Common myeloid progenitor, CD34-positive (primary cell): ENCODE measurements at regions of chr15 and their contacts with region 1.

Region 1: DNA sequence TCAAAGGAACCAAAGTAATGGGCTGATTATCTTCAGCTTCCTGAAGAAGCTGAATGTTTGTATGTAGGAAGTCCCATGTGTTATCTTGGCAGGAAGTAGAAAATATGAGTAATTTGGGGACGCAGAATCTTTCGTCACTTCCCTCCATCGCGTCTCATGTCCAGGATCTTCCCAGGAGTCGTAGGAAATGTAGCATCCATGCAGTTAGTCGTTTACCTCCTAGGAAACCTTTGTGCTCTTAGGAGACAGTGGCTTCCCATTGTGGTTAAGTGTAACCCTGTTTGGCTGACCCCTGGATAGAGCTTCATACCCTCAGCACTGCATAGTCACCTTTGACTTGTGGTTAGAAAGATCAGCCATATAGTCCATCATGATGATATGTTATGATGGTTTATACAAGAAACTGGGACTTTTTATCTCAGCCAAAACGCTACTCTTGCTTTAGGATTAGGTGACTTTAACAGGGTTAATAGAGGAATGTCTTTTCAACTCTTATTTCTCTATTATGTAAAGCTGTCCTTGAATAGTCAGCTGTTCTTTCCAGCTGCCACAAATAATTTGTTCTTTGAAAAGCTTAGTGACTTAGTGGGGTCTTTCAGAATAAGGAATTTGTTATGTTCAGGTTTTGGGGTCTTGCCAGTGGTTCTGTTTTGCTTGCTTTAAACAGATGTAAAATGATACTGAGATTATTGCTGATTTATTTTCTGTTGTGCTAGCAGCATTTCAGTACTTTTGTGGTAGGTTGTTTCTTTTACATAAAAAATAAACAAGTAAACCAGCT is 92.2 kb downstream of the KLHL25 start:
- DNase-seq: peak; percentile 41 to 55 (median 46)
- H3K4me3 ChIP-seq: peak overlapping the region in 2 of 7 experiments; percentile 32 to 40
- H3K27ac ChIP-seq: peak overlapping the region; percentile 76 to 90
- H3K4me1 ChIP-seq: peaks cover 13 to 56% (median 46%) of the 10 kb centered on the region in 4 experiments
- H3K27me3 ChIP-seq: no peaks in the 10 kb centered on the region

Region 2: DNA sequence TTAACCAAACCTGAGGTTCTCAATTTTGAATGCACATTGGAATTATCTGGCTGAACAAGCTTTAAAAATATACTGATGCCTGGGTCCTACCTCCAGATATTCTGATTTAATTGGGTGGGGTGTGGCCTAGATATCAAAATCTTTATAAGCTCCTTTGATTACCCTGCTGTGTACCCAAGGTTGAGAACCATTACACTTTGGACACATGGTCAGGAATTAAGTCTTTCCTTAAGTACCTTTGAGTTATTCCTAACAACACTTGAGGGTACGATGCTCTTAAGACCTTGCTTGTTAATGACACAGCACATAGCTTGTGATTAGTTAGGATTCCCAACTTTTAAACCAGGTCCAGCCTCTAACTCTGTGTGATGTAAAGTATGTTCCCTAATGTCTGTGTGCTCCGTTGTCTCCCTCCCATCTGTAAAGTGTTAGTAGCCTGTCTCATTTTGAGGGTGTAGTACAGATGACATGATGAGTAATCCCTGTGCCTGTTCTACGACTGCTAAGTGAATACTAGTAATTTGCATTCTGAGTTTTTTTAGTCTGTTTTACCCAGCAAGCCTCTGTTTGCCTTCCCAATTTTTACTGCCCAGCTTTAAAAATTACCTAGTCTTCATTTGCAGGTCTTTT is 62.6 kb before region 1 on chr15:
- CTCF ChIA-PET with region 1: no interaction called
- POLR2A ChIA-PET with region 1: no interaction called
- DNase-seq: no peak
- H3K4me3 ChIP-seq: no peak overlapping the region
- H3K27ac ChIP-seq: no peak overlapping the region
- H3K4me1 ChIP-seq: peaks cover 0 to 12% (median 3%) of the 10 kb centered on the region in 4 experiments
- H3K27me3 ChIP-seq: no peaks in the 10 kb centered on the region

Region 3: GRCh38 chr15:85689729-85690128 is 12.8 kb before region 1 on chr15:
- CTCF ChIA-PET with region 1: interaction called, 12 read pairs
- POLR2A ChIA-PET with region 1: interaction called, 4 read pairs
- DNase-seq: peak; percentile 77 to 90 (median 88)
- H3K4me3 ChIP-seq: peak overlapping the region; percentile 11 to 88 (median 73)
- H3K27ac ChIP-seq: peak overlapping the region; percentile 75 to 94
- H3K4me1 ChIP-seq: peaks cover 37 to 60% (median 45%) of the 10 kb centered on the region in 4 experiments
- H3K27me3 ChIP-seq: no peaks in the 10 kb centered on the region

Region 4: GRCh38 chr15:85831415-85832113 is 129.1 kb after region 1 on chr15:
- CTCF ChIA-PET with region 1: no interaction called
- POLR2A ChIA-PET with region 1: no interaction called
- DNase-seq: peak; percentile 29 to 55 (median 51)
- H3K4me3 ChIP-seq: no peak overlapping the region
- H3K27ac ChIP-seq: no peak overlapping the region
- H3K4me1 ChIP-seq: no peaks in the 10 kb centered on the region
- H3K27me3 ChIP-seq: peaks cover 0 to 2% (median 0%) of the 10 kb centered on the region in 5 experiments